Activated naive CD4-positive, alpha-beta T cell treated with anti-CD3 and anti-CD28 coated beads, Interleukin-2, amount 10 ng/mL, durations not matched to agents 7 days and 5 days (primary cell): ENCODE measurements at regions of chr3 and their contacts with region 1.

Region 1: GRCh38 chr3:14274999-14275961 is 96.7 kb downstream of the LSM3 start:
- DNase-seq: no peak
- H3K4me3 Mint-ChIP-seq: no peak overlapping the region
- H3K27ac Mint-ChIP-seq: no peak overlapping the region
- H3K4me1 Mint-ChIP-seq: no peaks in the 10 kb centered on the region
- H3K27me3 Mint-ChIP-seq: peaks cover 25% of the 10 kb centered on the region

Region 2: DNA sequence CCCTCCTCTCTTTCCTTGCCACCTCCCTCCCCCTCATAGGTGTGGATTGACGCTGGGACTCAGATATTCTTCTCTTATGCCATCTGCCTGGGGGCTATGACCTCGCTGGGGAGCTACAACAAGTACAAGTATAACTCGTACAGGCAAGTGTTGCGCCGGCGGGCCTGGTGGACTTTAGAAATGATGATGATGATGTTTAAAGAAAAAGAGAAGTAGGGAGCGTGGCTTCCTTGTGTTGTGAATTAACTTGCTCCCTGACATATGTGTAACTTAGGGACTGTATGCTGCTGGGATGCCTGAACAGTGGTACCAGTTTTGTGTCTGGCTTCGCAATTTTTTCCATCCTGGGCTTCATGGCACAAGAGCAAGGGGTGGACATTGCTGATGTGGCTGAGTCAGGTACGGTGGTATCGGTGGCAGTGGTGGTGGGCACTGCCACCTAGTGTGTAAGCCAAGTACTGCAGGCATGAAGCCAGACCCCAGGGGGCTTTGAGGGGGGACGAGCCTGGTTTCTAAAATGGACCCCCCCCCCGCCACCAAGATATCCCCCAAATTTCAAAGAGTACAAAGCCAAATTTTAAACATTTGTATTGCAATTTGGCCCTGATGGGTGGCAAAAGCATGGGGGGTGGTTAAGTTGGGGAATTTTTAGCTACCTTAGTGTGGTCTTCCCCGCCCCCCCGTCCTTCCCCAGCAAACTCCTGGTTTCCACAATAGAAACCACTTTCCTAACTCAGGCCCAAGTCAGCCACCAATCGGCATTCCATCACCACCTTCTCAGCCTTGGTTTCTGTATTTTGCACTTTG is 192.7 kb after region 1 on chr3:
- CTCF ChIA-PET with region 1: interaction called, 11 read pairs
- DNase-seq: peak; percentile 53
- H3K4me3 Mint-ChIP-seq: no peak overlapping the region
- H3K27ac Mint-ChIP-seq: no peak overlapping the region
- H3K4me1 Mint-ChIP-seq: peaks cover 2% of the 10 kb centered on the region
- H3K27me3 Mint-ChIP-seq: no peaks in the 10 kb centered on the region